PC-3 (cell line): ENCODE measurements at regions of chr3 and their contacts with region 1.

Region 1: GRCh38 chr3:163218336-163218735 is 1721.7 kb downstream of the OTOL1 start:
- DNase-seq: no peak
- ATAC-seq: no peak
- H3K4me3 ChIP-seq: no peak overlapping the region
- H3K27ac ChIP-seq: no peak overlapping the region
- H3K4me1 ChIP-seq: no peaks in the 10 kb centered on the region
- H3K27me3 ChIP-seq: no peaks in the 10 kb centered on the region
- CTCF ChIP-seq: no peak

Region 2: GRCh38 chr3:163071697-163072096 is 146.6 kb before region 1 on chr3:
- CTCF ChIA-PET with region 1: no interaction called
- POLR2A ChIA-PET with region 1: no interaction called
- intact Hi-C with region 1: loop called (anchors 10 kb)
- DNase-seq: peak; percentile 81
- ATAC-seq: peak; percentile 74
- H3K4me3 ChIP-seq: no peak overlapping the region
- H3K27ac ChIP-seq: no peak overlapping the region
- H3K4me1 ChIP-seq: peaks cover 6% of the 10 kb centered on the region; the same call in 1 of the 2 replicates
- H3K27me3 ChIP-seq: no peaks in the 10 kb centered on the region
- CTCF ChIP-seq: no peak

Region 3: DNA sequence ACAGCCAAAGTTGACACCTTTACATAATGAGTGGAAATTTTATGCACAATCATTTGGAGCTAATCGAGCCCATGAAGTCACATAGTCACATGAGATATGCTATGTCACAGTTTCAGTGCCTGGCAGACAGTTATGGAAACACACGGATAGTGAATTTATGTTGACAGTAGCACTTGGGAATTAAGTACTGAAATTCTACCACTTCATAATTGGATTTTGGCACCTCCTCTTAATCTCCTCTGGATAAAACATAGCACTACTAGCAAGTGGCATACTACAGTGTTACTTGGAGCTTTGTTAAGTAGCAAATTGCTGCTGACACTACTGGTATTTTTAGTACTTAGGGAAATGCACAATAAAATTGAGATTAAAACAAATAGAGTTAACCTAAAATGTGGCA is 42.4 kb before region 1 on chr3:
- CTCF ChIA-PET with region 1: no interaction called
- POLR2A ChIA-PET with region 1: no interaction called
- intact Hi-C with region 1: no loop called
- DNase-seq: no peak
- ATAC-seq: no peak
- H3K4me3 ChIP-seq: no peak overlapping the region
- H3K27ac ChIP-seq: no peak overlapping the region
- H3K4me1 ChIP-seq: no peaks in the 10 kb centered on the region
- H3K27me3 ChIP-seq: no peaks in the 10 kb centered on the region
- CTCF ChIP-seq: no peak